ENCODE measurements at regions of chr6 and their contacts with region 1.

Region 1: GRCh38 chr6:105431226-105431625 is 28.3 kb upstream of the PREP start:
- DNase-seq: no peak
- ATAC-seq: no peak
- H3K4me3 Mint-ChIP-seq: no peak overlapping the region
- H3K27ac Mint-ChIP-seq: no peak overlapping the region
- H3K4me1 Mint-ChIP-seq: peaks cover 2% of the 10 kb centered on the region
- H3K27me3 Mint-ChIP-seq: peaks cover 3% of the 10 kb centered on the region
- CTCF ChIP-seq: peak; percentile 81

Region 2: DNA sequence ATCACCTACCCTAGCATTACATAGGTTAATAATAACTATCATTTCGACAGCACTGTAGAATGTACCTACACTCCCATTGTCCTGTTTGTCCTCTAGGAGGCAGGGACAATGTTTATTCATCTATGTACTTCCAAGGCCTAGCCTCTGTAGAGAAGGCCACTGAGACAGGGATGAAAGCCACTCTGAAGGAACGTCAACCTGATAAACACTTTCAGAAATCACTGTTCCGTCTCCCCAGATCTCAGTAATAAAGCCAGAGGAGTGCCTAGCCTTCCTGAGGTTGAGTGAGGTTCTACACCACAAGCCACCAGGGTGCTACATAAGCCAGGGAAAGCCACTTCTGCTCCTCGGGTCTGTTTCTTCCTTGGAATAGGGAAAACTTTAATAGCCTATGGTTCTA is 296.2 kb before region 1 on chr6:
- CTCF ChIA-PET with region 1: no interaction called
- POLR2A ChIA-PET with region 1: no interaction called
- intact Hi-C with region 1: no loop called
- DNase-seq: no peak
- ATAC-seq: no peak
- H3K4me3 Mint-ChIP-seq: no peak overlapping the region
- H3K27ac Mint-ChIP-seq: no peak overlapping the region
- H3K4me1 Mint-ChIP-seq: peaks cover 3% of the 10 kb centered on the region
- H3K27me3 Mint-ChIP-seq: peaks cover 43% of the 10 kb centered on the region
- CTCF ChIP-seq: no peak

Region 3: GRCh38 chr6:105445481-105445880 is 14.3 kb after region 1 on chr6:
- CTCF ChIA-PET with region 1: interaction called, 11 read pairs
- POLR2A ChIA-PET with region 1: no interaction called
- intact Hi-C with region 1: no loop called
- DNase-seq: no peak
- ATAC-seq: no peak
- H3K4me3 Mint-ChIP-seq: no peak overlapping the region
- H3K27ac Mint-ChIP-seq: no peak overlapping the region
- H3K4me1 Mint-ChIP-seq: no peaks in the 10 kb centered on the region
- H3K27me3 Mint-ChIP-seq: no peaks in the 10 kb centered on the region
- CTCF ChIP-seq: no peak

Region 4: GRCh38 chr6:105452924-105453756 is 21.9 kb after region 1 on chr6:
- CTCF ChIA-PET with region 1: interaction called, 22 read pairs
- POLR2A ChIA-PET with region 1: no interaction called
- intact Hi-C with region 1: no loop called
- DNase-seq: peak; percentile 85
- ATAC-seq: peak; percentile 94
- H3K4me3 Mint-ChIP-seq: peak overlapping the region; percentile 74
- H3K27ac Mint-ChIP-seq: peak overlapping the region; percentile 85
- H3K4me1 Mint-ChIP-seq: peaks cover 33% of the 10 kb centered on the region
- H3K27me3 Mint-ChIP-seq: no peaks in the 10 kb centered on the region
- CTCF ChIP-seq: no peak

Region 5: DNA sequence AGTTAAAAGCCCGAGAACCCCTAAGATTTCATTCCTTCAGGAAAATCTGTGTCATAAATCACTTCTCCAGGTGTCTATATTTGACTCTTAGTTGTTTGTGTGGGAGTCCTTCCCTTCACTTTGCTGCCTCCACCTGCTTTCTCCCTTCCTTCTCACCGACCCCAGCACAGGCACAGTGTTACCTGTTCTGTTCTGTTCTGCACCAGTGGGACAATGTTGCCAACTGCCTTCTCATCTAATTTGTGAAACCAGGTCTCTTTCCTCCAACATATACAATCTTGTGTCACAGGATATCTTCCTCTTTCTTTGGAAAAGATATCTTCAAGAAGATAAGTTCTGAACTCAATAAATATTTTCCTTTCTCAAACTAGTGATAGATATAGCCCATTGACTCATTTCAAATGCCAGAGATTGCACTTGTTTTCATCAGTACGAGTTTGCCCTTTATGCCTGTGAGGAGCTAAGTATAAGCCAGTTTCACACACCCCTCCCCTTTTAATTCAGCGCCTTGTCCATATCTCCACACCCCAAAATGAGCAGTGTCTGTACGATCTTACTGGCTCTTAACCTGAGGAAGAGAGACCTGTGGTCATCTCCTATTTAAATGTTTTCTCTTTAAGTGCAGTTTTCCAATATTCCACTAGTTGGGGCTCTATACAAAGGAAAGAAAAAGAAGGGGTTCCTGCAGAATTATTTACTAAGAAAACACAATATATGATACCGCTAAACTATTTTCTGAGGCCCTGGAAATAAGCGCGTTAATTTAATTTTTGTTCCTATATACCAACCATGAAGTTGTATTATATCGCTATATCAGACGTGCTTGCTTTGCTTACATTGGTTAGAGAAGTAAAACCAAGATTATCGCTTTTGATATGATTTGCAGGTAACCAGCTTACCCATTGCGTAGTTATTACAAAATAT is 53.3 kb after region 1 on chr6:
- CTCF ChIA-PET with region 1: interaction called, 21 read pairs
- POLR2A ChIA-PET with region 1: no interaction called
- intact Hi-C with region 1: no loop called
- DNase-seq: peak; percentile 12
- ATAC-seq: peak; percentile 80
- H3K4me3 Mint-ChIP-seq: peak overlapping the region; percentile 22
- H3K27ac Mint-ChIP-seq: peak overlapping the region; percentile 74
- H3K4me1 Mint-ChIP-seq: peaks cover 21% of the 10 kb centered on the region
- H3K27me3 Mint-ChIP-seq: peaks cover 8% of the 10 kb centered on the region
- CTCF ChIP-seq: peak; percentile 62

Measured in activated CD8-positive, alpha-beta T cell treated with anti-CD3 and anti-CD28 coated beads for 36 hours (primary cell).